ENCODE measurements at regions of chr1 and their contacts with region 1.

Region 1: DNA sequence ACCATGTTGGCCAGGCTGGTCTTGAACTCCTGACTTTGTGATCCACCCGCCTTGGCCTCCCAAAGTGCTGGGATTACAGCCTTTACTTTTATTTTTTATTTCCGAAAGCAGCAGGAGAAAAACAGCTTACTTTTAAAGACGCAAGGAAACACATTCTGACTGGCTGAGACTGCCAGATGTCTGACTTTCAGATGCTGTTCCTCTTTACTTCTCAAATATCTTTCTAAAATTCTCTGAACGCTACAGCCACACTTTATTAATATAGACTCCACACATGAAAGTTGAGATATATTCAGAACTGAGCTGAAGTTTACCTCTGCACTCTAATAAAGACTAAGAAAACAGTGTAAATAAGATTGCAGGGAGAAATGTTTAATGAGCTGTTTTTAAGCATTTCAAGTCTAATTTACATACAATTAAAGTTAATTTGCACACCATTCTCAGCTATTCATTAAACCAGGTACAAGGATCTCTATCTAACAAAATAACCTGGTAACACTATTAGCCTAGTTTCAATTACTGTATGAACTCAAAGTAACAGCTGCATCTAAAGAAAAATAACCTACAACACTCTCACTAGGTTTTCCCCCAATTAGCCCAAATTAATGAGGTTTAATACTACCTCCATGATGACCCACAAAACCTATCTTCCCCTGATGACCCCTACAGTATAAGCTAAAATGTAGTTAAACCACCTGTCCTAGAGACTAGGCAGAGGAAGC is 24.9 kb downstream of the WASF2 start:
- DNase-seq: no peak
- ATAC-seq: no peak
- H3K4me3 ChIP-seq: no peak overlapping the region
- H3K27ac ChIP-seq: no peak overlapping the region; the same call in 2 of the 3 replicates
- H3K4me1 ChIP-seq: peaks cover 3 to 6% of the 10 kb centered on the region in 2 experiments; a peak in 3 of 5 replicates
- H3K27me3 ChIP-seq: no peaks in the 10 kb centered on the region
- CTCF ChIP-seq: no peak
- EP300 ChIP-seq: no peak
- POLR2A ChIP-seq: no peak
- RAD21 ChIP-seq: no peak

Region 2: GRCh38 chr1:27267153-27267552 is 197.9 kb before region 1 on chr1:
- CTCF ChIA-PET with region 1: no interaction called
- POLR2A ChIA-PET with region 1: no interaction called
- in situ Hi-C with region 1: no loop called
- intact Hi-C with region 1: no loop called
- DNase-seq: no peak
- ATAC-seq: no peak
- H3K4me3 ChIP-seq: no peak overlapping the region
- H3K27ac ChIP-seq: no peak overlapping the region
- H3K4me1 ChIP-seq: no peaks in the 10 kb centered on the region
- H3K27me3 ChIP-seq: no peaks in the 10 kb centered on the region
- CTCF ChIP-seq: no peak
- EP300 ChIP-seq: no peak
- POLR2A ChIP-seq: no peak
- RAD21 ChIP-seq: no peak

Region 3: DNA sequence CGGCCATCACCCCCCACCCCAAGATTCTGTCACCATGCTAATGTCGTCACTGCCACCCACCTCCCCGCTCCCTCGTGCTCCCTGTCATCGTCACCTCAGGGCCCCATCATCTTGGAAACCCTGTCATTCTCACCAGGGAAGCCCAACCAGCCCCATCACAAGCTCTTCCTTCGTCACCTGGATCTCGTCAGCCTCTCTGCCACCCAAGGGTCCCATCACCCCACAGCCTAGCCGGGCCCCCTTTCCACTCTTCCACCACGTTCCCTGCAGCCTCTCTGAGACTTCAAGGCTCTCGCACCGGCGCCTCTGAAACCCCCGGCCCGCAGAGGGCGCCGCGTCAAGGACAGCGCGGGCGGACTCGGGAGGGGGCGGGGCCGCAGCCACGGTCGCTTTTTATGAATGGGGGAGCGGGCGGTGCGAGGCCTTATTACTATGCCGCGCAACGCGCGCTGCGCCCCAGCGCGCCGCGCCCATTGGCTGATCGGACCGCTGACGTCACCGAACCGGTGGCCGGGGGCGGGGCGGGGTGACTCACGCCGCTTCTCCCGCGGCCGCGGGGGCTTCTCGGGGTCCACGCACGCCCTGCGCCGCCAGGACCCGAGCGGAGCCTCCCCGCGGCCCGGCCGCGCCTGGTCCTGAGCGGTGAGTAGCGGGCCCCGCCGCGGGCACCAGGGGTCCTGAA is 72.8 kb before region 1 on chr1 and contains the start of gene GPR3:
- CTCF ChIA-PET with region 1: no interaction called
- POLR2A ChIA-PET with region 1: no interaction called
- in situ Hi-C with region 1: no loop called
- intact Hi-C with region 1: no loop called
- DNase-seq: peak; percentile 98 to 100 (median 99)
- ATAC-seq: peak; percentile 94
- H3K4me3 ChIP-seq: peak within 1 kb of the TSS; percentile 96
- H3K27ac ChIP-seq: peak within 1 kb of the TSS; percentile 88
- H3K4me1 ChIP-seq: peaks cover 8 to 44% of the 10 kb centered on the region in 2 experiments
- H3K27me3 ChIP-seq: no peaks in the 10 kb centered on the region
- CTCF ChIP-seq: peak; percentile 68 to 89 (median 84)
- EP300 ChIP-seq: peak; percentile 54; the same call in 1 of the 2 replicates
- POLR2A ChIP-seq: peak; percentile 70
- RAD21 ChIP-seq: peak; percentile 45 to 60
- polyA plus RNA-seq, gene GPR3: 0.24 to 0.59 TPM

Region 4: GRCh38 chr1:27476237-27476636 is 11.2 kb after region 1 on chr1:
- CTCF ChIA-PET with region 1: no interaction called
- POLR2A ChIA-PET with region 1: interaction called, 29 read pairs
- in situ Hi-C with region 1: no loop called
- intact Hi-C with region 1: no loop called
- DNase-seq: peak in 1 of 4 experiments; percentile 29
- ATAC-seq: peak; percentile 39
- H3K4me3 ChIP-seq: no peak overlapping the region
- H3K27ac ChIP-seq: 0 out of 3 replicates have a peak overlapping the region, but pooled peaks have one; percentile 17
- H3K4me1 ChIP-seq: peaks cover 4 to 8% of the 10 kb centered on the region in 2 experiments; a peak in 4 of 5 replicates
- H3K27me3 ChIP-seq: no peaks in the 10 kb centered on the region
- CTCF ChIP-seq: no peak
- EP300 ChIP-seq: no peak
- POLR2A ChIP-seq: no peak
- RAD21 ChIP-seq: no peak

Region 5: GRCh38 chr1:27481994-27482620 is 17.0 kb after region 1 on chr1:
- CTCF ChIA-PET with region 1: no interaction called
- POLR2A ChIA-PET with region 1: interaction called, 29 read pairs
- in situ Hi-C with region 1: no loop called
- intact Hi-C with region 1: no loop called
- DNase-seq: no peak
- ATAC-seq: no peak
- H3K4me3 ChIP-seq: no peak overlapping the region
- H3K27ac ChIP-seq: no peak overlapping the region
- H3K4me1 ChIP-seq: peaks cover 0 to 9% of the 10 kb centered on the region in 2 experiments; a peak in 2 of 5 replicates
- H3K27me3 ChIP-seq: no peaks in the 10 kb centered on the region
- CTCF ChIP-seq: no peak
- EP300 ChIP-seq: no peak
- POLR2A ChIP-seq: no peak
- RAD21 ChIP-seq: no peak

Measured in K562 (cell line).